PC-9 (cell line): ENCODE measurements at regions of chr20 and their contacts with region 1.

Region 1: DNA sequence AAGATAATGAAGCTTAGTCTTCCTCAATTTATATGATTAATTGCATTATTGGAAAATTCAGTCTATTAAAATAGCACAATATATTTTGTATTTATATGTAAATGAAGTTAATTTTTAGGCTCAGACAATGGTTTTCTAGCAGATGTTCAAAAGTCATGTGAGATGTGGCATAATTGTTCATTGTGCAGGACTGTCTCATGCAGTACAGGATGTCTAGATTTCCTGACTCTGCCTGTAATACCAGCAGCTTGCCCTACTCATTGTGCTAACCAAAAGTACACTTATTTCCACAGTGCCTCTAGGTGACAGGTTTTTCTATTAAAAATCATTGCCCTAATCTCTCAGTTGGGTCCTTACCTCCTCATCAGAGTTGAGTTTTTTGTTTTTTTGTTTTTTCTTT is 12.4 kb downstream of the RALGAPB start:
- DNase-seq: no peak
- H3K4me3 ChIP-seq: no peak overlapping the region
- H3K27ac ChIP-seq: no peak overlapping the region
- H3K4me1 ChIP-seq: no peaks in the 10 kb centered on the region
- H3K27me3 ChIP-seq: no peaks in the 10 kb centered on the region
- CTCF ChIP-seq: no peak

Region 2: GRCh38 chr20:38460040-38460623 is 24.9 kb before region 1 on chr20:
- CTCF ChIA-PET with region 1: interaction called, 11 read pairs
- POLR2A ChIA-PET with region 1: no interaction called
- intact Hi-C with region 1: no loop called
- DNase-seq: peak; percentile 65 to 92
- H3K4me3 ChIP-seq: no peak overlapping the region; the same call in 1 of the 2 replicates
- H3K27ac ChIP-seq: peak overlapping the region; percentile 40
- H3K4me1 ChIP-seq: peaks cover 11% of the 10 kb centered on the region
- H3K27me3 ChIP-seq: no peaks in the 10 kb centered on the region
- CTCF ChIP-seq: no peak